ENCODE measurements at regions of chr4 and their contacts with region 1.

Region 1: GRCh38 chr4:55321707-55322264 is 24.3 kb upstream of the SRD5A3 start:
- DNase-seq: no peak
- H3K4me3 Mint-ChIP-seq: no peak overlapping the region
- H3K27ac Mint-ChIP-seq: no peak overlapping the region
- H3K4me1 Mint-ChIP-seq: peaks cover 27% of the 10 kb centered on the region
- H3K27me3 Mint-ChIP-seq: peaks cover 6% of the 10 kb centered on the region

Region 2: GRCh38 chr4:54322818-54323417 is 998.9 kb before region 1 on chr4:
- intact Hi-C with region 1: loop called (anchors 5 kb)
- DNase-seq: peak; percentile 31
- H3K4me3 Mint-ChIP-seq: no peak overlapping the region
- H3K27ac Mint-ChIP-seq: no peak overlapping the region
- H3K4me1 Mint-ChIP-seq: peaks cover 13% of the 10 kb centered on the region
- H3K27me3 Mint-ChIP-seq: no peaks in the 10 kb centered on the region

Region 3: GRCh38 chr4:54971474-54971950 is 350.3 kb before region 1 on chr4:
- intact Hi-C with region 1: loop called (anchors 1 kb)
- DNase-seq: no peak
- H3K4me3 Mint-ChIP-seq: no peak overlapping the region
- H3K27ac Mint-ChIP-seq: no peak overlapping the region
- H3K4me1 Mint-ChIP-seq: peaks cover 3% of the 10 kb centered on the region
- H3K27me3 Mint-ChIP-seq: peaks cover 5% of the 10 kb centered on the region

Region 4: GRCh38 chr4:55078987-55079386 is 242.8 kb before region 1 on chr4:
- intact Hi-C with region 1: loop called (anchors 5 kb)
- DNase-seq: no peak
- H3K4me3 Mint-ChIP-seq: no peak overlapping the region
- H3K27ac Mint-ChIP-seq: no peak overlapping the region
- H3K4me1 Mint-ChIP-seq: peaks cover 6% of the 10 kb centered on the region
- H3K27me3 Mint-ChIP-seq: peaks cover 2% of the 10 kb centered on the region

Region 5: GRCh38 chr4:55184600-55185523 is 136.9 kb before region 1 on chr4:
- intact Hi-C with region 1: loop called (anchors 5 kb)
- DNase-seq: no peak
- H3K4me3 Mint-ChIP-seq: no peak overlapping the region
- H3K27ac Mint-ChIP-seq: no peak overlapping the region
- H3K4me1 Mint-ChIP-seq: peaks cover 2% of the 10 kb centered on the region
- H3K27me3 Mint-ChIP-seq: peaks cover 1% of the 10 kb centered on the region

Region 6: GRCh38 chr4:55336136-55337034 is 14.6 kb after region 1 on chr4:
- intact Hi-C with region 1: loop called (anchors 2 kb)
- DNase-seq: no peak
- H3K4me3 Mint-ChIP-seq: no peak overlapping the region
- H3K27ac Mint-ChIP-seq: peak overlapping the region; percentile 80
- H3K4me1 Mint-ChIP-seq: peaks cover 19% of the 10 kb centered on the region
- H3K27me3 Mint-ChIP-seq: no peaks in the 10 kb centered on the region